Activated CD8-positive, alpha-beta T cell treated with anti-CD3 and anti-CD28 coated beads for 36 hours (primary cell): ENCODE measurements at regions of chr5 and their contacts with region 1.

Region 1: GRCh38 chr5:136249678-136250266 is 56.8 kb upstream of the SMIM32 start:
- DNase-seq: peak; percentile 43
- ATAC-seq: no peak
- H3K4me3 Mint-ChIP-seq: no peak overlapping the region
- H3K27ac Mint-ChIP-seq: no peak overlapping the region
- H3K4me1 Mint-ChIP-seq: no peaks in the 10 kb centered on the region
- H3K27me3 Mint-ChIP-seq: peaks cover 11% of the 10 kb centered on the region
- CTCF ChIP-seq: peak; percentile 34

Region 2: DNA sequence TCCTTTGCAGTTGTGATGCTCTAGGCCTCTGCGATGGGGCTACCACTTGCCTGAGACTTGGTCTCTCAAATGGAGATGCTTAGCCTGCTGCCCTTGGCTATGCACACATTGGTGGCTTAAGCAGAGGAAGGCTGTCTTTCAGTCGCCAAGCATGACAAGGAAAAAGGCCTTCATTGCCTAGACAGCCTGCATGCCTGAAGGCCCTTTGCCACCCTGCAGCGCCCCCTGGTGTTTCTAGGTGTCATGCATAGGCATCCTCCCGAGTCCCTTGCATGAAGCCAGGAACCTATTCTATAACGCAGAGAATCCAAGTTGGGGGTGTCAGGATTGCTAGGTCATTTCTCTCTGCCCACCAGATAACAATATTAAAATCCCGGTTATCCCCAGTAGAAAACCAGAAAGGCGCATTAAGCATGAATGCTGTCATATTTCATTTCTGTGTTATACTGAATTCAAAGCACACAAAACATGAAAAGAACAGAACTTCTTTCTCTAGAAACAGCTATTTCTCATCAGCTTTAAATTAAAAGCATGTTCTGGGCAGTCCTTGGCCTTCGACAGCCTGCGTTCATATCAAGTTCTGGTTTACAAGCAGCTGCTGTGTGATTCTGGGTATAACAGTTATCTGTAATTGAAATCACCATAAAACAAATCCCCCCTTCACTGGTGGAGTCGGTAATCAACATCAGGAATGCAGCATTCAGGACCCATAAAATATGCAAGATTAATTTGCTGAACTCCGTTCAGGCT is 175.2 kb after region 1 on chr5:
- CTCF ChIA-PET with region 1: interaction called, 4 read pairs
- POLR2A ChIA-PET with region 1: no interaction called
- intact Hi-C with region 1: loop called (anchors 10 kb)
- DNase-seq: peak; percentile 75
- ATAC-seq: no peak
- H3K4me3 Mint-ChIP-seq: no peak overlapping the region
- H3K27ac Mint-ChIP-seq: no peak overlapping the region
- H3K4me1 Mint-ChIP-seq: no peaks in the 10 kb centered on the region
- H3K27me3 Mint-ChIP-seq: no peaks in the 10 kb centered on the region
- CTCF ChIP-seq: peak; percentile 49

Region 3: GRCh38 chr5:136734628-136735027 is 484.9 kb after region 1 on chr5:
- CTCF ChIA-PET with region 1: no interaction called
- POLR2A ChIA-PET with region 1: no interaction called
- intact Hi-C with region 1: no loop called
- DNase-seq: no peak
- ATAC-seq: no peak
- H3K4me3 Mint-ChIP-seq: no peak overlapping the region
- H3K27ac Mint-ChIP-seq: no peak overlapping the region
- H3K4me1 Mint-ChIP-seq: no peaks in the 10 kb centered on the region
- H3K27me3 Mint-ChIP-seq: peaks cover 1% of the 10 kb centered on the region
- CTCF ChIP-seq: no peak